ENCODE measurements at regions of chr2 and their contacts with region 1.

Region 1: GRCh38 chr2:58762176-58762781 is 521.2 kb upstream of the FANCL start:
- DNase-seq: peak; percentile 13 to 78 (median 28)
- ATAC-seq: peak; percentile 92
- H3K4me3 ChIP-seq: no peak overlapping the region
- H3K27ac ChIP-seq: no peak overlapping the region
- H3K4me1 ChIP-seq: peaks cover 3 to 15% of the 10 kb centered on the region in 2 experiments; a peak in 4 of 5 replicates
- H3K27me3 ChIP-seq: no peaks in the 10 kb centered on the region
- CTCF ChIP-seq: peak; percentile 64 to 68 (median 64)
- EP300 ChIP-seq: no peak
- POLR2A ChIP-seq: no peak
- RAD21 ChIP-seq: peak; percentile 73 to 82

Region 2: GRCh38 chr2:58871469-58872142 is 109.3 kb after region 1 on chr2:
- CTCF ChIA-PET with region 1: no interaction called
- POLR2A ChIA-PET with region 1: no interaction called
- in situ Hi-C with region 1: no loop called
- intact Hi-C with region 1: loop called (anchors 5 kb)
- DNase-seq: peak in 3 of 4 experiments; percentile 10 to 21 (median 16)
- ATAC-seq: peak; percentile 76
- H3K4me3 ChIP-seq: no peak overlapping the region
- H3K27ac ChIP-seq: no peak overlapping the region
- H3K4me1 ChIP-seq: no peaks in the 10 kb centered on the region
- H3K27me3 ChIP-seq: no peaks in the 10 kb centered on the region
- CTCF ChIP-seq: peak; percentile 17 to 40 (median 20); a peak in 3 of 6 replicates
- EP300 ChIP-seq: no peak
- POLR2A ChIP-seq: no peak
- RAD21 ChIP-seq: peak in 1 of 2 experiments; percentile 48; a peak in 2 of 4 replicates

Region 3: GRCh38 chr2:58973831-58974281 is 211.6 kb after region 1 on chr2:
- CTCF ChIA-PET with region 1: no interaction called
- POLR2A ChIA-PET with region 1: no interaction called
- in situ Hi-C with region 1: no loop called
- intact Hi-C with region 1: loop called (anchors 10 kb)
- DNase-seq: no peak
- ATAC-seq: no peak
- H3K4me3 ChIP-seq: no peak overlapping the region
- H3K27ac ChIP-seq: no peak overlapping the region
- H3K4me1 ChIP-seq: no peaks in the 10 kb centered on the region
- H3K27me3 ChIP-seq: no peaks in the 10 kb centered on the region
- CTCF ChIP-seq: no peak
- EP300 ChIP-seq: no peak
- POLR2A ChIP-seq: no peak
- RAD21 ChIP-seq: no peak

Region 4: GRCh38 chr2:59025157-59025757 is 263.0 kb after region 1 on chr2:
- CTCF ChIA-PET with region 1: no interaction called
- POLR2A ChIA-PET with region 1: no interaction called
- in situ Hi-C with region 1: no loop called
- intact Hi-C with region 1: loop called (anchors 5 kb)
- DNase-seq: peak; percentile 27 to 55 (median 34)
- ATAC-seq: peak; percentile 93
- H3K4me3 ChIP-seq: no peak overlapping the region
- H3K27ac ChIP-seq: no peak overlapping the region
- H3K4me1 ChIP-seq: no peaks in the 10 kb centered on the region
- H3K27me3 ChIP-seq: no peaks in the 10 kb centered on the region
- CTCF ChIP-seq: peak; percentile 75 to 86 (median 82)
- EP300 ChIP-seq: no peak
- POLR2A ChIP-seq: no peak
- RAD21 ChIP-seq: peak; percentile 56 to 82

Region 5: GRCh38 chr2:59176737-59177136 is 414.5 kb after region 1 on chr2:
- CTCF ChIA-PET with region 1: no interaction called
- POLR2A ChIA-PET with region 1: no interaction called
- in situ Hi-C with region 1: no loop called
- intact Hi-C with region 1: loop called (anchors 5 kb)
- DNase-seq: peak in 1 of 4 experiments; percentile 8
- ATAC-seq: no peak
- H3K4me3 ChIP-seq: no peak overlapping the region
- H3K27ac ChIP-seq: no peak overlapping the region
- H3K4me1 ChIP-seq: no peaks in the 10 kb centered on the region; a peak in 1 of 5 replicates
- H3K27me3 ChIP-seq: peaks cover 0 to 11% of the 10 kb centered on the region in 2 experiments; a peak in 3 of 5 replicates
- CTCF ChIP-seq: peak in 1 of 3 experiments; percentile 27; a peak in 1 of 6 replicates
- EP300 ChIP-seq: no peak
- POLR2A ChIP-seq: no peak
- RAD21 ChIP-seq: peak in 1 of 2 experiments; percentile 40; a peak in 2 of 4 replicates